Upper lobe of right lung (tissue), 1 donor: ENCODE measurements at regions of chr17 and their contacts with region 1.

Region 1: GRCh38 chr17:73429440-73430164 is 117.8 kb upstream of the CDC42EP4 start:
- DNase-seq: peak; percentile 94
- ATAC-seq: peak; percentile 94
- H3K4me3 ChIP-seq: no peak overlapping the region
- H3K27ac ChIP-seq: no peak overlapping the region
- H3K4me1 ChIP-seq: peaks cover 11% of the 10 kb centered on the region
- H3K27me3 ChIP-seq: no peaks in the 10 kb centered on the region
- CTCF ChIP-seq: peak; percentile 95

Region 2: DNA sequence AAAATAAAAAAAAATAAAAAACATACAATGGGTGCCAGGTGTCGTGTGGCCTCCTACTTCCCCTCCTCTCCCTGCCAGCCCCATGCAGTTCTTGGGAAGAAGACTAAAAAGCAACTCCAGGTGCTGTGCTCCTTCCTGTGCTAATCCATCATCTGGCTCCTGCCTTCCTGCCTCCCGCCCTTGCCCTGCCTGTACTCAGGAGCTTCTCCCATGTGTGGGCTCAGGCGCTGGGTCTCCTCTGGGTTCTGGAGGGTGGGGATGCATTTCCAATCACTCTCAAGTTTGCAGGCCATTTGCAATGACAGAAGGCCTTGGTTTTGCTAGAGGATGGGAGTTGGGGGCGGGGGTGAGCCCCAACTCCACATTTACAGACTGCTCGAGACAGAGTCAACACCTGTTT is 91.8 kb after region 1 on chr17:
- intact Hi-C with region 1: no loop called
- DNase-seq: no peak
- ATAC-seq: no peak
- H3K4me3 ChIP-seq: no peak overlapping the region
- H3K27ac ChIP-seq: no peak overlapping the region
- H3K4me1 ChIP-seq: no peaks in the 10 kb centered on the region
- H3K27me3 ChIP-seq: no peaks in the 10 kb centered on the region
- CTCF ChIP-seq: no peak

Region 3: DNA sequence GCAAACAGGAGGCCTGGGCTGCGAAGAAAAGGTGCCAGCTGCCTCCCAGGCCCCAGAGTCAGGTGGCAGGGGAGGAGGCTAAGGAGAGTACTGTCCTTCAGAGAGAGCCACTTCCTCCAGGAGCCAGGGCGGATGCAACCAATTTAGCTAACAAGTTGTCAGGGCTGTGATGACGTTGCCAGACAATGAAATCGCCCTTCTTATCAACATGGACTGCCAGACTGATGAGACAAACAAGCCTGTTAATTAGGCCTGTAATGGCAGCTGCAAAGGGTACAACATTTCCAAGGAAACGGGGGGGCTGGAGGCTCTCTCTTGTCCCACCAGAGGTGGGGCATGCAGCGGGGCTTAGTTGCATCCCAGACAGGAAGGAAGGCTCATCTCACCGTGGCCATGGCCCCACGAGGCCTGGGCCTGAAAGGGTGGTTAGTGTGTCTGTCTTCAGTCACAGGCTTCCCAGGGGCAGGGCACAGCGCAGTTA is 102.9 kb after region 1 on chr17:
- intact Hi-C with region 1: no loop called
- DNase-seq: no peak
- ATAC-seq: no peak
- H3K4me3 ChIP-seq: no peak overlapping the region
- H3K27ac ChIP-seq: no peak overlapping the region
- H3K4me1 ChIP-seq: no peaks in the 10 kb centered on the region
- H3K27me3 ChIP-seq: peaks cover 4% of the 10 kb centered on the region
- CTCF ChIP-seq: no peak

Region 4: GRCh38 chr17:74163271-74163821 is 733.7 kb after region 1 on chr17:
- intact Hi-C with region 1: loop called (anchors 10 kb)
- DNase-seq: peak; percentile 29
- ATAC-seq: peak; percentile 74
- H3K4me3 ChIP-seq: no peak overlapping the region
- H3K27ac ChIP-seq: no peak overlapping the region
- H3K4me1 ChIP-seq: no peaks in the 10 kb centered on the region
- H3K27me3 ChIP-seq: peaks cover 16% of the 10 kb centered on the region
- CTCF ChIP-seq: no peak